PC-9 (cell line): ENCODE measurements at regions of chr9 and their contacts with region 1.

Region 1: DNA sequence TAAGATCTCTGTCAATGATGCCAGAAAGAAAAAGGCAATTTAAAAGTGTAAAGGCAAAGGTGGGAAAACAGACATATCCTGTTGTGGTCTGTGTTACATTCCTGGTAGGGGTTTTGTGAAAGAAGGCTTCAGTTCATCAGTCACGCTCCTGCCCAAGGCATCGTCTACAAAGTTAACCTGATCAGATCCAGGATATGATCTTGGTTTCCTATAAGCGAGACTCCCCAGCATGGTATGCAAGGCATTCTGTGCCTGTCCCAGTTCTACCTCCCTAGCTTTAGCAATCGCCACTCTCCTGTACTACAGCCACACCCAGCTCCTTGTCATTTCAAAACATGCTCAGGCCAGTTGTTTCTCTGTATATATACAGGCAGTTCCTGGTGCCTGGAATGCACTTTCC is 58.0 kb upstream of the PTPN3 start:
- DNase-seq: peak; percentile 86 to 99
- H3K4me3 ChIP-seq: no peak overlapping the region; the same call in 1 of the 2 replicates
- H3K27ac ChIP-seq: peak overlapping the region; percentile 97
- H3K4me1 ChIP-seq: peaks cover 55% of the 10 kb centered on the region
- H3K27me3 ChIP-seq: no peaks in the 10 kb centered on the region
- CTCF ChIP-seq: no peak

Region 2: DNA sequence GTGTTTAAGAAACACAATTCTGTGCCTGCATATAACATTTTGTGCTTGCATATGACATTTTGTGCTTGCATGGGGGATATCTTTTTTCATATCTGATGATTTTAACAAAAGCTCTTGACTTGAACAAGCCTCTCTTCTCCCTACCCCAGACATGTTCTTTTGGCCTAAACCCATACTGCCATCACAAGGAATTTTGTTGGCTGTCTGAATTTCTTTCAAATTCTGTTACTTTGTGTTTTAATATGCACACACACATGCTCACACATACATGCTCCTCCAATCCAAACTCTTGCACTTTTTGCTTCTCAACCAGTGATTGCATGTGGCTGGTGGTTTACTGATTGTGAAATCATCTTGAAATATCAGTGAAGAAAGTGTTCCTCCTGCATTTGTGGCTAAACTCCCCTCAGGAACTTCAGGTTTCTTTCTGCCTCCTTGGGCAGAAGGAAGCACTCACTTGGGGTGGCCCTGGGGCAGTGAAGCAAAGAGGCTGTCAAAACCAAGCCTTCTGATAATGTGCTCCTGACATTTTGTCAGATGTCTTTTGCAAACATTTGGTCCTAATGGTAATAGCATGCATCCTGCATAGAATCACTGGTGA is 1689.2 kb before region 1 on chr9:
- CTCF ChIA-PET with region 1: no interaction called
- POLR2A ChIA-PET with region 1: no interaction called
- intact Hi-C with region 1: loop called (anchors 10 kb)
- DNase-seq: no peak
- H3K4me3 ChIP-seq: no peak overlapping the region
- H3K27ac ChIP-seq: no peak overlapping the region
- H3K4me1 ChIP-seq: peaks cover 12% of the 10 kb centered on the region
- H3K27me3 ChIP-seq: no peaks in the 10 kb centered on the region
- CTCF ChIP-seq: no peak

Region 3: GRCh38 chr9:109341565-109341964 is 214.5 kb before region 1 on chr9:
- CTCF ChIA-PET with region 1: no interaction called
- POLR2A ChIA-PET with region 1: no interaction called
- intact Hi-C with region 1: loop called (anchors 1 kb)
- DNase-seq: peak; percentile 55 to 73
- H3K4me3 ChIP-seq: no peak overlapping the region
- H3K27ac ChIP-seq: 0 out of 2 replicates have a peak overlapping the region, but pooled peaks have one; percentile 18
- H3K4me1 ChIP-seq: peaks cover 34% of the 10 kb centered on the region
- H3K27me3 ChIP-seq: no peaks in the 10 kb centered on the region
- CTCF ChIP-seq: no peak

Region 4: DNA sequence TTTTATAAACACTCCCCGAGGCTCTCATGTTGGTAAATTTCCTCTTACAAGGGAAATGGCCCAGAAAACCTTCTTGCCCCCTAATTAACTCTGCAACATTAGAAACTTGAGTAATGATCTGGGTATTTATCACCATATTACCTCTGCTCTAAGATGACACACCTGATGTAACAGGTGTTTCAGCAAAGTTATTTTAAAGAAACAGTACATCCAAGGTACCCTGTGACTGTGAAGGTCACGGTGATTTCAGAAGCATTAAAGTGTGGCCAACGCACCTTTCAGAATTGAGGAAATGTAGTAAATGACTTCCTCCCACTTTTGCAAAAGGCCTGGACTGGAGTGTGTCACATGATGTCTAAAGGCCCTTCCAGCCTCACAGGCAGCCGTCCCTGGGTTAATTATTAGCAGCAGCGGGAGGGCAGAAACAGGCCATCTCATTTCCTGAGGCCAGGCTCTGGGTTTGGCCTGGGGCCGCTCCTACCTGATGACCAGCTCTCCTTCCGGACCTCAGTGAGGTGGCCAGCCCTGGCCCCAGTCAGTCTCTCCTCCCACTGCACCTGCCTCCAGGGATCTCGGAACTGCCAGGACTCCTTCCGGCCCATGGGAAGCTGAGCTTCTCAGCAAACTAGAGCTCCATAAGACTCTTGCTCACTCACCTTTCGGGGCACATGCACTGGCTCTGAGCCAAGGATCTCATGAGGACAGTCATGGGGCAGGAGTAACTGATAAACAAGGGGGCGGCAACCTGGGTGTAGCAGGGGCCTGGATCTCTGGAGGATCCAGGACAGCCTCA is 78.6 kb before region 1 on chr9:
- CTCF ChIA-PET with region 1: no interaction called
- POLR2A ChIA-PET with region 1: no interaction called
- intact Hi-C with region 1: loop called (anchors 1 kb)
- DNase-seq: peak; percentile 83 to 99
- H3K4me3 ChIP-seq: peak overlapping the region; percentile 38; the same call in 1 of the 2 replicates
- H3K27ac ChIP-seq: peak overlapping the region; percentile 99
- H3K4me1 ChIP-seq: peaks cover 84% of the 10 kb centered on the region
- H3K27me3 ChIP-seq: no peaks in the 10 kb centered on the region
- CTCF ChIP-seq: no peak

Region 5: GRCh38 chr9:109520478-109521132 is 35.5 kb before region 1 on chr9:
- CTCF ChIA-PET with region 1: no interaction called
- POLR2A ChIA-PET with region 1: interaction called, 5 read pairs
- intact Hi-C with region 1: loop called (anchors 1 kb)
- DNase-seq: peak; percentile 71 to 91
- H3K4me3 ChIP-seq: no peak overlapping the region
- H3K27ac ChIP-seq: peak overlapping the region; percentile 61
- H3K4me1 ChIP-seq: peaks cover 46% of the 10 kb centered on the region
- H3K27me3 ChIP-seq: no peaks in the 10 kb centered on the region
- CTCF ChIP-seq: peak; percentile 95

Region 6: DNA sequence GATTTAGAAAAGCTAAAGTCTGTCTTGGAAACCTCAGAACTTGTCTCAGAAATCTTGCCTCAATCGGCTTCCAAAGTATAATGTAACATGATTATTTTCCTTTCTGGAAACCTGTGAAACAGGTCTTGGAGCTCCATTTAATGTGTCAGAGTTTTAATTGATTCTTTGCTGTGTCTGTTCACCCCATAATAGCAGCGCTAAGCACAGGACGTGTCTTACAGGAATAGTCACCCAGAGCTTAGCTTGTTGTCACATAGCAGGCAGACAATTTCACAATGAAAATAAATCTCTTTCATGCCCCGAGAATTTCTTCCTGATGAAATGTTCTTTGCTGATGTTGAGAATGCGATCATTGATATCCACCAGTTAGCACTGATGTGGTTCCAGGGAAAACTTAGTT is 17.7 kb before region 1 on chr9:
- CTCF ChIA-PET with region 1: no interaction called
- POLR2A ChIA-PET with region 1: no interaction called
- intact Hi-C with region 1: loop called (anchors 2 kb)
- DNase-seq: peak; percentile 20 to 97
- H3K4me3 ChIP-seq: peak overlapping the region; percentile 38
- H3K27ac ChIP-seq: peak overlapping the region; percentile 78
- H3K4me1 ChIP-seq: peaks cover 31% of the 10 kb centered on the region
- H3K27me3 ChIP-seq: no peaks in the 10 kb centered on the region
- CTCF ChIP-seq: no peak

Region 7: GRCh38 chr9:109640580-109641371 is 84.7 kb after region 1 on chr9:
- CTCF ChIA-PET with region 1: no interaction called
- POLR2A ChIA-PET with region 1: no interaction called
- intact Hi-C with region 1: loop called (anchors 2 kb)
- DNase-seq: peak in 1 of 2 experiments; percentile 55
- H3K4me3 ChIP-seq: peak overlapping the region; percentile 96
- H3K27ac ChIP-seq: no peak overlapping the region
- H3K4me1 ChIP-seq: peaks cover 5% of the 10 kb centered on the region; the same call in 1 of the 2 replicates
- H3K27me3 ChIP-seq: peaks cover 12% of the 10 kb centered on the region
- CTCF ChIP-seq: no peak